ENCODE measurements at regions of chr16 and their contacts with region 1.

Region 1: DNA sequence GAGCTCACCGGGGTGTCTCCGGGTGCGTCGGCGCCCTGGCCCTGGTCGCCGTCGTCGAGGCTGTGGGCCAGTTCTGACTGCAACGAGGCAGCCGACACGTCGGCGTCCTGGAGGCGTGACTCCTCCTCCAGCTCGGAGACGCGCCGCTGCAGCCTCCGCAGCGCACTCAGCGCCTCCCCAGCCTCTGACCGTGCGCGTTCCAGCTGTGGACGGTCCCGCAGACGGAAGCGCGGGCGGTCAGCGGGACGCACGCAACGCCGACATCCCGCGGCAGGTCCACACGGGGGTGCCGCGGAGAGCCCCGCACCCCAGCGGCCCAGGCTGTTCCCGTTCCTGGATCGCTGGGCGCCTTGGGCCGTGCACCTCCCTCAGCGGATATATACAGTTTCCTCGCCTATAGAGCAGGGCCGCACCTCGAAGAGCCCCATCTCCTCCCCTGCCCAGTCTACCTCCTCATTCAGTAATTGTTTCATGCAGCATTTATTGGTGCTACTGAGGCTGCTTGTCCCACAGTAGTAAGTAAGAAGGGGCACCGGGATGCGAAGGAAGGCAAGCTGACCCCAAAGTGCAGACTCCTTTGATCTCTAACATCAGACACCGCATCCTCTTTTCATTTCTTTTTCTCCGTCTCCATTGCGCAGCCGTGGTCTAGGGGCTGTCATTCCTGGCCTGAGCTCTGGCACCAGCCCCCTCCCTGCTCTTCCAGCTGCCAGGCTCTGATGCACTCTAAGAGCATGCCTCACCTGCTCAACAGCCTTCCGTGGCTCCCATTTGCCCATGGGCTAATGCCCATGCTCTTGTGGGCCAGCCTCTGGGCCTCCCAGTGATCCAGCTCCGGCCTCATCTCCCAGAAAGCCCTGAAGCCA is 5.9 kb downstream of the THOC6 start:
- DNase-seq: peak in 1 of 9 donors; percentile 68
- ATAC-seq: peak; percentile 17
- H3K4me3 ChIP-seq: peak overlapping the region; percentile 43
- H3K4me3 Mint-ChIP-seq: peak overlapping the region; percentile 50 to 82 (median 70)
- H3K27ac ChIP-seq: no peak overlapping the region
- H3K27ac Mint-ChIP-seq: peak overlapping the region in 3 of 9 donors; percentile 26 to 60 (median 40)
- H3K4me1 ChIP-seq: peaks cover 18% of the 10 kb centered on the region in 2 donors
- H3K4me1 Mint-ChIP-seq: peaks cover 15 to 35% (median 25%) of the 10 kb centered on the region in 7 donors
- H3K27me3 ChIP-seq: peaks cover 6 to 9% of the 10 kb centered on the region in 2 donors
- H3K27me3 Mint-ChIP-seq: peaks cover 33 to 49% (median 37%) of the 10 kb centered on the region in 5 donors

Region 2: GRCh38 chr16:3045357-3045728 is 15.6 kb after region 1 on chr16:
- CTCF ChIA-PET with region 1: interaction called, 18 read pairs
- POLR2A ChIA-PET with region 1: interaction called, 8 read pairs
- intact Hi-C with region 1: loop called (anchors 1 to 2 kb)
- DNase-seq: peak in 4 of 9 donors; percentile 31 to 50 (median 44)
- ATAC-seq: peak; percentile 50
- H3K4me3 ChIP-seq: no peak overlapping the region
- H3K4me3 Mint-ChIP-seq: peak overlapping the region; percentile 75 to 90 (median 78)
- H3K27ac ChIP-seq: no peak overlapping the region
- H3K27ac Mint-ChIP-seq: peak overlapping the region in 2 of 9 donors; percentile 75 to 76
- H3K4me1 ChIP-seq: peaks cover 8 to 29% of the 10 kb centered on the region in 2 donors
- H3K4me1 Mint-ChIP-seq: peaks cover 16 to 30% (median 23%) of the 10 kb centered on the region in 7 donors
- H3K27me3 ChIP-seq: peaks cover 0 to 36% of the 10 kb centered on the region in 2 donors
- H3K27me3 Mint-ChIP-seq: peaks cover 7 to 39% (median 33%) of the 10 kb centered on the region in 5 donors

Region 3: GRCh38 chr16:3165111-3165822 is 135.5 kb after region 1 on chr16:
- CTCF ChIA-PET with region 1: interaction called, 8 read pairs
- POLR2A ChIA-PET with region 1: interaction called, 3 read pairs
- intact Hi-C with region 1: loop called in 1 of 2 experiments (anchors 1 kb)
- DNase-seq: no peak
- ATAC-seq: no peak
- H3K4me3 ChIP-seq: no peak overlapping the region
- H3K4me3 Mint-ChIP-seq: peak overlapping the region; percentile 39 to 80 (median 58)
- H3K27ac ChIP-seq: peak overlapping the region; percentile 55
- H3K27ac Mint-ChIP-seq: peak overlapping the region; percentile 36 to 93 (median 71)
- H3K4me1 ChIP-seq: peaks cover under 1 to 4% of the 10 kb centered on the region in 2 donors
- H3K4me1 Mint-ChIP-seq: peaks cover 9 to 24% (median 10%) of the 10 kb centered on the region in 7 donors
- H3K27me3 ChIP-seq: no peaks in the 10 kb centered on the region
- H3K27me3 Mint-ChIP-seq: peaks cover 0 to 27% (median 0%) of the 10 kb centered on the region in 5 donors

Measured in naive thymus-derived CD4-positive, alpha-beta T cell (primary cell).